Panc1 (cell line): ENCODE measurements at regions of chr18 and their contacts with region 1.

Region 1: DNA sequence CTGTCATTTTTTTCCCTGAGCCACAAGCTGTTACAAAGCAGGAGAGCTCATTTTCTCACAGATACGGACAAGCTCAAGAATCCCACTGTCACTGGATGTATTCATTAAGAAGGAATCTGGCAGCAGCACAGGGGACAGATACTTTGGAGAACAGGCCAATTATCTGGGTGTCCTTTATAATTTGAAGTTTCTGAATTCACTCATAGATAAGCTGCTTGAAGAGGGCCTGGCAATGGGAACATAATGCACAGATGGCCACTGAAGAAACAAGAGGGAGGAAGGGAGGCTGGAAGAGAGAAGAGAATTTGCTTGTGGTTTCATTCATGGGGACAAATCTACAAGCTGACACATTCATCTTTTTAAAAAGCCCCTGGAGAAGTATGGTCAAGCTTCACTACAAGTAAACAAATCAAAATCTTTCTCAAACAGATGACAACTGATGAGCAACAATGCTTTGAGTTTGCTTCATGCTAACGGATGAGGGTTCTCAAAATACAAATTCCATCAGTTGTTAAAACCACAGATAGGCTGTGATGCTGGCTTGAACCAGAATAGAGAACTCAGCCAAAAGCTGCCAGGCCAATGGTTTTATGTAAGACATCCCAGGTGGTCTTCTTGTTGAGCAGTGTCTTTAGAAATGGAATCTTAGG is 11.9 kb downstream of the BCL2 start:
- DNase-seq: no peak
- ATAC-seq: no peak
- H3K4me3 ChIP-seq: no peak overlapping the region
- H3K27ac ChIP-seq: no peak overlapping the region
- H3K4me1 ChIP-seq: no peaks in the 10 kb centered on the region
- H3K27me3 ChIP-seq: no peaks in the 10 kb centered on the region
- CTCF ChIP-seq: no peak

Region 2: GRCh38 chr18:62625019-62625418 is 682.7 kb before region 1 on chr18:
- CTCF ChIA-PET with region 1: no interaction called
- POLR2A ChIA-PET with region 1: interaction called, 15 read pairs
- in situ Hi-C with region 1: no loop called
- intact Hi-C with region 1: no loop called
- DNase-seq: no peak
- ATAC-seq: no peak
- H3K4me3 ChIP-seq: no peak overlapping the region
- H3K27ac ChIP-seq: no peak overlapping the region
- H3K4me1 ChIP-seq: no peaks in the 10 kb centered on the region
- H3K27me3 ChIP-seq: no peaks in the 10 kb centered on the region
- CTCF ChIP-seq: no peak